Esophagus muscularis mucosa (tissue), 4 donors: ENCODE measurements at regions of chr3 and their contacts with region 1.

Region 1: DNA sequence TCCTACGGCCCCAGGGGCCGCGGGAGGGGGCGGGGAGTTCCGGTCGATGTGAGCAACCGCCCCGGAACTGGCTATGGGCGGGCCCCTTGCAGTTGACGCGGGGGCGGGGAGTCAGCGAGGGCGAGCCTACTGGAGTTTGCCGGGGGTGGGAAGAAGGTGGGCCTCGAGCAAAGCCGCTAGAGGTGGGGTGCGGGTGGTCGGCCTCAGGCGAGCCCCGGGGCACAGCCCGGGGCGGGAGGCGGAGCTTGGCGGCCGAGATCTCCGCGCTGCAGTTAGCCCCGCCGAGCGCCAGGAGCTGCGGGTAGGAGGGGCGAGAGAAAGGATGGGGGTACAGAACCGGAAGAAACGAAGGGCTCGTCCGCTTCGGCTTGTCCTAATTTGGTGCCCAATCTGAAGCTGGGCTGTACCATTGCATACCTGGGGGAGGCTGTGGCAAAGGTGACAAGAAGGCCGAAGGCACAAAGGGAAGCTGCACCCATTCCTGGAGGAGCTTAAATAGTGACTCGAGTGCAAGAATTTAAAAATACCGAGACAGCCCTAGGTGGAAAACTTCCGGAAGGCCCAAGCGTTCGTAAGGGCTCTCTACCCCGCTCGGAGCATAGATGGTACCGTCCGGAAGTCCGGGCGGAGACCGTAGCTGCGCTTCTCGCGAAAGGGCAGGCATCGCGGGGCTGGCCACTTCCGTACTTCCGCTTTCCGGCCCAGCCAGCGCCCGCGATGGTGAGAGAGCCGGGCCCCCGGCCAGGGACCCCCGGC is at the starts of genes ARPC4 and TADA3:
- DNase-seq: peak; percentile 98
- H3K4me3 ChIP-seq: peak within 1 kb of the TSS; percentile 74 to 96 (median 92)
- H3K27ac ChIP-seq: peak within 1 kb of the TSS; percentile 94 to 98 (median 97)
- H3K4me1 ChIP-seq: peaks cover 22 to 61% (median 50%) of the 10 kb centered on the region in 4 donors
- H3K27me3 ChIP-seq: no peaks in the 10 kb centered on the region
- CTCF ChIP-seq: peak in 2 of 3 experiments; percentile 22 to 26
- EP300 ChIP-seq: no peak
- POLR2A ChIP-seq: no peak
- total RNA-seq, gene ARPC4: 129 to 191 (median 164) TPM
- total RNA-seq, gene TADA3: 64.4 to 80.9 (median 74.6) TPM

Region 2: GRCh38 chr3:9715764-9716437 is 76.7 kb before region 1 on chr3:
- intact Hi-C with region 1: loop called (anchors 5 kb)
- DNase-seq: peak; percentile 94
- H3K4me3 ChIP-seq: no peak overlapping the region
- H3K27ac ChIP-seq: peak overlapping the region; percentile 55 to 75 (median 68)
- H3K4me1 ChIP-seq: peaks cover 3 to 18% (median 14%) of the 10 kb centered on the region in 4 donors
- H3K27me3 ChIP-seq: no peaks in the 10 kb centered on the region
- CTCF ChIP-seq: peak; percentile 75 to 90 (median 88)
- EP300 ChIP-seq: no peak
- POLR2A ChIP-seq: no peak

Region 3: DNA sequence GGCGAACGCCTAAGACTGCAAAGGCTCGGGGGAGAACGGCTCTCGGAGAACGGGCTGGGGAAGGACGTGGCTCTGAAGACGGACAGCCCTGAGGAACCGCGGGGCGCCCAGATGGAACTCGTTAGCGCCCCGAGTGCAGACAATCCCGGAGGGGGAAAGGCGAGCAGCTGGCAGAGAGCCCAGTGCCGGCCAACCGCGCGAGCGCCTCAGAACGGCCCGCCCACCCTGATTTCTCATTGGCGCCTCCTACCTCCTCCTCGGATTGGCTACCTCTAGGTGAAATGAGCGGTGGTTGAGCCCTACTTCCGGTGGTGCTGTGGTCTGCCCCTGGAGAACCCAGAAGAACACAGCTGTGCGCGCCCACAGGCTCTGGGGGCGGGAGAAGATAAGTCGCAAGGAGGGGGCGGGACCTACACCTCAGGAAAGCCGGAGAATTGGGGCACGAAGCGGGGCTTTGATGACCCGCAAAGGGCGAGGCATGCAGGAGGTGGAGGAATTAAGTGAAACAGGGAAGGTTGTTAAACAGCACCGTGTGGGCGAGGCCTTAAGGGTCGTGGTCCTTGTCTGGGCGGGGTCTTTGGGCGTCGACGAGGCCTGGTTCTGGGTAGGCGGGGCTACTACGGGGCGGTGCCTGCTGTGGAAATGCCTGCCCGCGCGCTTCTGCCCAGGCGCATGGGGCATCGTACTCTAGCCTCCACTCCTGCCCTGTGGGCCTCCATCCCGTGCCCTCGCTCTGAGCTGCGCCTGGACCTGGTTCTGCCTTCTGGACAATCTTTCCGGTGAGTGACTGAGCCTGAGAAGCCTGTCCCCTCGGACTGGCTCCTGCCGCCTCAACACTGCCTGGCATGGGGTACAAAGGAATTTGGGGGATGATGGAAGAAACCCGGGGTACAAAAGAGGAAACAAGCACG is 42.7 kb before region 1 on chr3 and contains the start of gene OGG1:
- intact Hi-C with region 1: loop called (anchors 5 kb)
- DNase-seq: peak; percentile 99
- H3K4me3 ChIP-seq: peak within 1 kb of the TSS; percentile 58 to 76 (median 69)
- H3K27ac ChIP-seq: peak within 1 kb of the TSS; percentile 83 to 92 (median 90)
- H3K4me1 ChIP-seq: peaks cover 21 to 47% (median 38%) of the 10 kb centered on the region in 4 donors
- H3K27me3 ChIP-seq: no peaks in the 10 kb centered on the region
- CTCF ChIP-seq: no peak
- EP300 ChIP-seq: no peak
- POLR2A ChIP-seq: no peak
- total RNA-seq, gene OGG1: 18.6 to 28.3 (median 24.9) TPM

Region 4: DNA sequence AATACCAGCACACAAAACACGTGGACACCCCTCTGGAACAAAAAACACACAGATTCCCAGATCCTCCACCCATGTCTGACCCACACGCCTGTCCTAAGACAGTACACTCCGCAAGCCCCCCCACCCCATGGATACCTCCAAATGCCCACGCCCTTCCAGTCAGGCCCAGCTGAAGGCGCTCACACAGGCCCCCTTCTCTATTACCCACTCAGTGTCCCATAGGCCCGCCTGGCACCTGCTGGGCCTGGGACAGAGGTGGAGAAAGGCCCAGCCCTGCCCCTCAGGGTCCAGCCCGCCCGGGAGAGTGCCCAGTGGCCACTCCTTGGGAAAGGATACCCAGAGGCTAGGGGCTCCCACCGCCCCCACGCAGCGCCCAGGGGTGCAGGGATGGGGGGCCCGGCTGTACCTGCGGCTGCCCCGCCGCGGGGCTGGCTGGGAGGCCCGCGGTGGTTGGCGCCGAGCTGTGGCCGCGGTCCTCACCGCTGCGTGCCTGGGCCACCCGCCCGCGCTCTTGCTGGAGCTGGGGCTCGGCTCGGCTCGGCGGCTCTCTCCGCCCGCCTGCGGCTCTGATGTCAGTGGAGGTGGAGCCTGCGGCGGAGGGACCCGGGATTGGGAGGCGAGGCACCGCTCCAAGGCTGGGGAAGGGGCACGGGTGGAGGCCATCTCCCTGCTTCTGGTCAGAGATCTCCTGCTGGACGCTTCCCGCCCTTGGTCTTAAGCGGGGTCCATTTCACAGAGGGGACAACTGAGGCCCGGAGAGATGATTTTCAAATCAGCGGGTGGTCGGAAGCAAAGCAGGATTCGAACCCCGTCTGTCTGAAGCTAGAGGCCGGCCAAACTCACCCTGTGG is 22.9 kb before region 1 on chr3 and contains the start of gene CAMK1:
- intact Hi-C with region 1: loop called (anchors 2 kb)
- DNase-seq: no peak
- H3K4me3 ChIP-seq: peak within 1 kb of the TSS; percentile 77 to 90 (median 85)
- H3K27ac ChIP-seq: peak within 1 kb of the TSS; percentile 88 to 93 (median 90)
- H3K4me1 ChIP-seq: peaks cover 34 to 46% (median 43%) of the 10 kb centered on the region in 4 donors
- H3K27me3 ChIP-seq: no peaks in the 10 kb centered on the region
- CTCF ChIP-seq: no peak
- EP300 ChIP-seq: no peak
- POLR2A ChIP-seq: peak; percentile 73
- total RNA-seq, gene CAMK1: 53.6 to 78.9 (median 70.2) TPM